Aorta (tissue), 5 donors: ENCODE measurements at regions of chr10 and their contacts with region 1.

Region 1: GRCh38 chr10:70461215-70461986 is 17.2 kb upstream of the PALD1 start:
- DNase-seq: peak in 1 of 2 donors; percentile 81
- ATAC-seq: peak; percentile 70
- H3K4me3 ChIP-seq: no peak overlapping the region
- H3K27ac ChIP-seq: no peak overlapping the region
- H3K4me1 ChIP-seq: no peaks in the 10 kb centered on the region
- H3K27me3 ChIP-seq: no peaks in the 10 kb centered on the region

Region 2: GRCh38 chr10:70540089-70540788 is 78.8 kb after region 1 on chr10:
- intact Hi-C with region 1: loop called (anchors 2 kb)
- DNase-seq: no peak
- ATAC-seq: no peak
- H3K4me3 ChIP-seq: no peak overlapping the region
- H3K27ac ChIP-seq: no peak overlapping the region
- H3K4me1 ChIP-seq: no peaks in the 10 kb centered on the region
- H3K27me3 ChIP-seq: no peaks in the 10 kb centered on the region